ENCODE measurements at regions of chr17 and their contacts with region 1.

Region 1: GRCh38 chr17:143782-144281 is 6.5 kb downstream of the SCGB1C2 start:
- DNase-seq: peak; percentile 81 to 93 (median 88)
- H3K4me3 ChIP-seq: no peak overlapping the region
- H3K27ac ChIP-seq: no peak overlapping the region
- H3K4me1 ChIP-seq: peaks cover 2% of the 10 kb centered on the region
- H3K27me3 ChIP-seq: no peaks in the 10 kb centered on the region
- CTCF ChIP-seq: peak; percentile 75 to 87 (median 85)
- EP300 ChIP-seq: no peak
- POLR2A ChIP-seq: no peak

Region 2: GRCh38 chr17:181215-182049 is 37.6 kb after region 1 on chr17 and contains the start of gene DOC2B:
- intact Hi-C with region 1: no loop called
- DNase-seq: peak in 3 of 5 donors; percentile 42 to 70 (median 66)
- H3K4me3 ChIP-seq: peak within 1 kb of the TSS; percentile 17
- H3K27ac ChIP-seq: no peak within 1 kb of the TSS
- H3K4me1 ChIP-seq: peaks cover 2% of the 10 kb centered on the region
- H3K27me3 ChIP-seq: peaks cover 5% of the 10 kb centered on the region
- CTCF ChIP-seq: no peak
- EP300 ChIP-seq: no peak
- POLR2A ChIP-seq: no peak
- total RNA-seq, gene DOC2B: 0.83 to 4.5 (median 2.0) TPM

Region 3: GRCh38 chr17:233473-233941 is 89.7 kb after region 1 on chr17:
- intact Hi-C with region 1: no loop called
- DNase-seq: peak in 2 of 5 donors; percentile 21 to 24
- H3K4me3 ChIP-seq: no peak overlapping the region
- H3K27ac ChIP-seq: no peak overlapping the region
- H3K4me1 ChIP-seq: no peaks in the 10 kb centered on the region
- H3K27me3 ChIP-seq: no peaks in the 10 kb centered on the region
- CTCF ChIP-seq: no peak
- EP300 ChIP-seq: no peak
- POLR2A ChIP-seq: no peak

Region 4: GRCh38 chr17:395179-395578 is 251.3 kb after region 1 on chr17:
- intact Hi-C with region 1: no loop called
- DNase-seq: no peak
- H3K4me3 ChIP-seq: no peak overlapping the region
- H3K27ac ChIP-seq: no peak overlapping the region
- H3K4me1 ChIP-seq: peaks cover 4% of the 10 kb centered on the region
- H3K27me3 ChIP-seq: no peaks in the 10 kb centered on the region
- CTCF ChIP-seq: no peak
- EP300 ChIP-seq: no peak
- POLR2A ChIP-seq: no peak

Region 5: DNA sequence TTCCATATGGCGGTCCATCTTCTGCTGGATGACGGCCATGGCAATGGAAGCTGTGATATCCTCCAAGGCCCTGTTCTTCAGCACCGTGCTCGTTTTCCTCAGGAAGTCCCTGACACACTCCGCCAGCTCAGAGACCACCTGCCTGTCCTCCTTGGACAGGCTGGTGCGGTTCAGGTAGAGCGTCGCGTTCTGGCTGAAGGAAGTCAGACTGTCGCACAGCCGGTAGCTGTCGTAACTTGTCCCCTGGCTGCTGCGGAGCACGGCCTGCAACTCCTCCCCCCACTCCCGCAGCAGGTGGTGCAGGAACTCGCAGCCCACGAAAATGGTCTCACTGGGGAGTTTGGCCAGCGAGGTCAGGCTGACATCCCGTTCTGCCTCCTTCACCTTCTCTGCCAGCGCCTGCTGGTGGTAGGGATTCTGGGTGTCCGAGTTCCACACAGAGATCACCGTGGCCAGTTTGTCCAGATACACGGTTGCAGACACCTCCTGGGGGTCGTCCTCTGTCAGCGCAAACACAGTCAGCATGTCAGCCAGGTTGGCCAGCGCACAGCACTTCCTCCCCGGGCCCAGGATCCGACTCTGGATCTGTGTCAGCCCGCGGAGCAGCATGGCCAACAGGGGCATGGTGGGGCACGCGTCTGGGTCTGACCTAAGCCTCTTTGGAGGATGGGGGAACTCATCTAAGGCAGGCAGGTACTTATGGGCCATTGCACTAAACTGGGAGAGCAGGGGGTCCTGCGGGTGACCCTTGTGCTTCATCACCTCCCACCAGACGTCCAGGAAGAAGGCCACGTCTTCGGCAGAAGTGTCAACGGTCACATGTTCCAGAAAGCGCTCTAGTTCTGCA is 603.2 kb after region 1 on chr17:
- intact Hi-C with region 1: loop called in 1 of 4 experiments (anchors 5 kb)
- DNase-seq: no peak
- H3K4me3 ChIP-seq: no peak overlapping the region
- H3K27ac ChIP-seq: no peak overlapping the region
- H3K4me1 ChIP-seq: peaks cover 8% of the 10 kb centered on the region
- H3K27me3 ChIP-seq: no peaks in the 10 kb centered on the region
- CTCF ChIP-seq: no peak
- EP300 ChIP-seq: no peak
- POLR2A ChIP-seq: no peak

Measured in ovary (tissue), 10 donors.